ENCODE measurements at regions of chr10 and their contacts with region 1.

Region 1: DNA sequence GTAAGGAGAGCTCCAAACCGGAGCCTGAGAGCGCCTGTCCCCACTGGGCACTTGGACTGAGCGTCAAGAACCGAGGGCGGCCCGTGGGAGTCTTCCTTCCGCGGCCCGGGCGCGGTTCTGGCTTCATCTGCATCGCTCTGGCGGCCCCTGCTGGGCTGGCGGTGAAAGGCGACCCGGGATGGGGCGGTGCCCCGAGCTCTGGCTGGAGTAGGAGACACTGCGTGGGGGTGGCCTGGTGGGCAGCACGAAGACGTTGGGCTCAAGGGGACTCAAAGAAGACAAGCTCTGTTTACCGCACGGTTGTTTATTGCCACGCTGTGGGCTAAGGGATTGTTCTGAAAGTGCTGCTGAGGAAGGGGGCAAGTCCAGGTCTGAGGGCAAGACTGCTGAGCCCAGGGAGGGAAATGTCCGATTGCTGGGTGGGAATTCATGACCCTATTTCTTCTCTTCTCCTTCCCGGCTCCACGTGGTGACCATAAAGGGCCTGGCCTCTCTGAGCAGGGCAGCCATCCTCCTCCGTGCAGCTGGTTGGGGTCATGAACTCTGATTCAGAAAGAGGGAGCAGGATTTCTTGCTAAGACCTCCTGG is 29.8 kb downstream of the PLAU start:
- DNase-seq: peak; percentile 97
- ATAC-seq: peak; percentile 93

Region 2: DNA sequence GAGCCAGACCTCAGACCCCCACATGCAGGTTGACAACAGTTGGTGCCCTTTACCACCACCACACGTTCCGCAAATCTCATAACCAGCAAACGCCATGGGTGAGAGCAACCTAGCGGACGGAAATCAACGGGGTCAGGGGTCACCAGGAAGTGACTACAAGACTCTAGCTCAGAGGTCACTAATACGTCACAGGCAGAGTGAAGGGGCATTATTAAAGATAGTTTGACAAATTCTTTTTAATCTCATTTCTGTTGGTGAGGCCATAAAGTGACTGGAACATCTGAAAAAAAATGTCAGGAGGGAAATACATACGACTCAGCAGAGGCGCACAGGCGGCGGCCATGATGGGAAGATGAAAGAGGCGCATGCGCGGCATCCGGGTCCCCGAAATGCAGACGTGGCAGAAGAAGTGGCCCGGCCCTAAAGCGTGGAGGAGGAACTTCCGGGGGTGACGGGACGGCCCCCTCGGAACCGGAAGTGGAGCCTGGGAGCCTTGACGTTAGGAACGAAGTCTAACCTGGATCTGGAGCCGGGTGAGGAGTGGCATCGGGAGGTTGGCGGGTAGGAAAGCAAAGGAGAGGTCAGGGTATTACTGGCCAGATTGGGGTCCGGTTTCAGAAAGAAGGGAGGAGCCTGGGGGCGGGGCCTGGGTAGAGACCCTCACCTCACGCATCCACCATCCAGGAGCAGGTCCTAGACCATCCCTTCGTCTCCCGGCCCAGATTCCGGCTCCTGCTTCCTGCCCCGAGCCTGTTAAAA is 196.6 kb before region 1 on chr10 and contains the start of gene SEC24C:
- intact Hi-C with region 1: no loop called
- DNase-seq: peak; percentile 98
- ATAC-seq: peak; percentile 96
- total RNA-seq, gene SEC24C: 46.4 TPM

Region 3: GRCh38 chr10:73848821-73849489 is 91.8 kb before region 1 on chr10:
- intact Hi-C with region 1: loop called (anchors 2 kb)
- DNase-seq: peak; percentile 89
- ATAC-seq: peak; percentile 83

Region 4: GRCh38 chr10:73886085-73886529 is 54.6 kb before region 1 on chr10:
- intact Hi-C with region 1: loop called (anchors 1 kb)
- DNase-seq: peak; percentile 77
- ATAC-seq: peak; percentile 89

Region 5: GRCh38 chr10:73908853-73909538 is 31.7 kb before region 1 on chr10:
- intact Hi-C with region 1: loop called (anchors 1 kb)
- DNase-seq: no peak
- ATAC-seq: no peak

Measured in Right ventricle myocardium inferior (tissue), 1 donor.